Activated CD8-positive, alpha-beta memory T cell treated with anti-CD3 and anti-CD28 coated beads, Interleukin-2, amount 10 ng/mL, durations not matched to agents 7 days and 5 days (primary cell): ENCODE measurements at regions of chr4 and their contacts with region 1.

Region 1: DNA sequence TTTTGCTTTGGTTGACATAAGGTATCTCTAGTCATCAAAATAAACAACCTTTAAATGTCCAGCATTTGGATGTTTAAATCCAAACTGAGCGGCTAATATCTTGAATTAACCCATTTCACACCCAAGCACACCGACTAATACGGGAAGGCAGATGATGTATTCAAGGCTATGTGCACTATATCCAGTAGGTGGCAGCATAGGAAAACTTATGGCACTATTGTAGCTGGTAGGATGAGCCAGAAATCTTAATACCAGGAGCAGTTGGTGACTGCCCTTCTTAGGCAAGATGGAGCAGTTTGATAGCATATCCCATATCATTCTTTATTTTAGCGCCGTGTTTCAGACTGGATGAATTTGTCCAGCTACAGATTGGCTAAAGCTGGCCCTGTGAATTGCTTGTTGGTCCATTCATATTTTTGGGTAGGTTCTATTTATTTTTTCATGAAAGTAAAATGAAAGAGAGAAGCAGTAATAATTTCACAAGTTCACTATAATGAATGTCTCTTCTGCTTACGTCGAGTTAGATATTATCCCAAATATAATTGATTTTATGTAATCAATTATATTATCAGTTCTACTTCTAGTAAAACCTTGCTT is 24.4 kb downstream of the UCHL1 start:
- DNase-seq: peak; percentile 42
- ATAC-seq: peak; percentile 81
- H3K4me3 Mint-ChIP-seq: no peak overlapping the region
- H3K27ac Mint-ChIP-seq: no peak overlapping the region
- H3K4me1 Mint-ChIP-seq: no peaks in the 10 kb centered on the region
- H3K27me3 Mint-ChIP-seq: no peaks in the 10 kb centered on the region

Region 2: GRCh38 chr4:41432881-41433280 is 151.7 kb after region 1 on chr4:
- CTCF ChIA-PET with region 1: no interaction called
- DNase-seq: no peak
- ATAC-seq: no peak
- H3K4me3 Mint-ChIP-seq: no peak overlapping the region
- H3K27ac Mint-ChIP-seq: no peak overlapping the region
- H3K4me1 Mint-ChIP-seq: no peaks in the 10 kb centered on the region
- H3K27me3 Mint-ChIP-seq: no peaks in the 10 kb centered on the region

Region 3: GRCh38 chr4:41644288-41644914 is 363.3 kb after region 1 on chr4:
- CTCF ChIA-PET with region 1: interaction called, 14 read pairs
- DNase-seq: no peak
- ATAC-seq: no peak
- H3K4me3 Mint-ChIP-seq: no peak overlapping the region
- H3K27ac Mint-ChIP-seq: no peak overlapping the region
- H3K4me1 Mint-ChIP-seq: no peaks in the 10 kb centered on the region
- H3K27me3 Mint-ChIP-seq: peaks cover 37% of the 10 kb centered on the region

Region 4: DNA sequence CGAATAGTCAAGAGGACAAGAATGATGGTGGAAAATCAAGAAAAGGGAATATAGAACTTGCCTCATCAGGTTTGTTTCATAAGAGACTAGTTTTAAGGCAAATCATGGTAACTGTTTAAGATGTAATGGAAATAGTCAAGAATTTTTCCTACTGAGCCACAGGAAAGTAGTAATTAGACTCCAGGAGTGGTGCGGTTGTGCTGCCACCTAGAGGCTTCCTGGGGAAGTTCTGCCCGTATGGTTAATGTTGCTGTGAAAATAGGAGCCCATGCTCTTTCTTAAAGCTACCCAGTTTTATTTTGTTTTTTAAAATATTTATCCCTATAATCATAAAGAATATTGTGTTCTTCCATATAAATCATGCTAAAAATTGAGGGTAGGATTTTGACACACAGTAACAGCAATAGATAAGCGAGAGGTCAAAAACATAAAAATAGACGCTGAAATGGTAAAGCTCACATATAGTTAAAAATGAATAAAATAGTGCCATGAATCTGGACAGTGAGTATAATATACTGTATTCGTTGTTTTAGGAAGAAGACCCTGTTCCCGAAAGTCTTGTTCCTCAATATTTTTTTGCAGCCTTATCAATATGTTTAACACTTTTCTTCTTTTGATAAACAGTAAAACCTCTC is 380.4 kb after region 1 on chr4:
- CTCF ChIA-PET with region 1: interaction called, 65 read pairs
- DNase-seq: peak; percentile 49
- ATAC-seq: no peak
- H3K4me3 Mint-ChIP-seq: no peak overlapping the region
- H3K27ac Mint-ChIP-seq: no peak overlapping the region
- H3K4me1 Mint-ChIP-seq: no peaks in the 10 kb centered on the region
- H3K27me3 Mint-ChIP-seq: no peaks in the 10 kb centered on the region